HCT116 (cell line): ENCODE measurements at regions of chr19 and their contacts with region 1.

Region 1: DNA sequence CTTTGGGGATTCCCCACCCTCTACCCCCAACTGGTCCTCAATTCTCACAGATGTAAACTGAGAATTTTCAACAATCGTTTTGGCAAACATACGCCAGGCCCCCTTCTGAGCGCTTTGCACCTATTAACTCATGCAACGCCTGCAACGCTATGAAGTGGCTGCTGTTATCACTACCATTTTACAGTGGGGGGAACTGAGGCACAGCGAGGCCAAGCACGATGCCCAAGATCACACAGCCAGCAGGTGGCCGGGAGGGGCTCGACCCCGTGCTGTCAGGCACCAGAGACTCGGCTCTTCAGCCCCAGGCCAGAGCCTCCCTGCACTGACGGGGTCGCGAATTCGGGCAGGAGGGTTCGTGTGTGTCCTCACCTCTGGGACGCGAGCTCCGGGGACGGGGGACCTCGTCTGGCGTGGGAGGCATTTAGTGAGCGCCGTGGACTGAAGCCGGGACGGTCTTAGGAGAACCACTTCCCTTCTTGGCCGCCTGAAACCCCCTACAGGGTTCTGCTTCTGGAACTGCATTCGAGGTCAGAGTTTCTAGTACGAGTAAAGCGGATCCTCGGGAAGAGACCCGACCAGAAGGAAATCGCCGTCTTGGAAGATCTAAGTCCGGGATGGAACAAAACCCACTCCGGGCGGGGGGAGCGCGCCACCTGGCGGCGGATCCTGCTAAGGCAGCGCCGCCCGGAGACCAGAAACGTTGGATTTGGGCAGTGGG is 21.0 kb downstream of the ZNF114 start:
- DNase-seq: no peak
- ATAC-seq: peak; percentile 76
- H3K4me3 ChIP-seq: peak overlapping the region; percentile 50 to 70
- H3K27ac ChIP-seq: peak overlapping the region; percentile 50
- H3K4me1 ChIP-seq: peaks cover 2 to 39% of the 10 kb centered on the region in 2 experiments; a peak in 3 of 4 replicates
- H3K27me3 ChIP-seq: no peaks in the 10 kb centered on the region
- CTCF ChIP-seq: peak; percentile 95 to 99 (median 96)
- POLR2A ChIP-seq: no peak
- RAD21 ChIP-seq: peak; percentile 93

Region 2: DNA sequence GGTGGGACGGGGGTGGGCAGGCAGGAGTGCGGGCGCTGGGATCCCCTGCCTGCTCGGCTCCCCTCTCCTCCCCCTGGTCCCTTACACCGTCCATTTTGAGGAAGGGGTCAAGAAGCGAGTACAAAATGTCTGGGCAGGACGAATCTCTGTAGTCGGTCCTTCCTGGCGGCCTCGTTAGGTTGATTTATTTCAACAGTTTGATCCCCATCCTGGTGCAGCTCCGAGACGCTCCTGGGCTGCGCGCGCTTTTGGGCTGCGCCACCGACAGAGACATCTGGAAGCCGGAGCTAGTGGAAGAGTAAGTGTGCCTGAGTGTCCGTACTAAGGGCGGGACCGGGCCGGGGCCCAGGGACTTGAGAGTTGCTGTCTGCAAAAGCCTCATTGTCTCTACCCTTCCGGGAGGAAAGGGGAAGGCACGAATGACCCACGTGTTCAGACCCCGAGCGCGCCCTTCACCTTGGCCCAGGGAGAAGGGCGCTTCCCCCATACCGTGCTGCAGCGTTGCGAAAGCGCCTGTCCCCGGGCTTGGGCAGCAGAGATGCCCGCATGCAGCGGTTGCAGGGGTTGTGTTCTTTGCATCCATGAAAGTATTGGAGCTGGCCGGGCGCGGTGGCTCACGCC is 19.3 kb before region 1 on chr19:
- CTCF ChIA-PET with region 1: interaction called, 16 read pairs
- POLR2A ChIA-PET with region 1: interaction called, 7 read pairs
- RAD21 ChIA-PET with region 1: interaction called, 3 to 5 read pairs
- intact Hi-C with region 1: loop called (anchors 1 kb)
- DNase-seq: no peak
- ATAC-seq: peak; percentile 43
- H3K4me3 ChIP-seq: peak overlapping the region; percentile 56 to 61
- H3K27ac ChIP-seq: peak overlapping the region; percentile 85
- H3K4me1 ChIP-seq: peaks cover 18 to 43% of the 10 kb centered on the region in 2 experiments
- H3K27me3 ChIP-seq: no peaks in the 10 kb centered on the region
- CTCF ChIP-seq: no peak
- POLR2A ChIP-seq: peak; percentile 44
- RAD21 ChIP-seq: no peak

Region 3: DNA sequence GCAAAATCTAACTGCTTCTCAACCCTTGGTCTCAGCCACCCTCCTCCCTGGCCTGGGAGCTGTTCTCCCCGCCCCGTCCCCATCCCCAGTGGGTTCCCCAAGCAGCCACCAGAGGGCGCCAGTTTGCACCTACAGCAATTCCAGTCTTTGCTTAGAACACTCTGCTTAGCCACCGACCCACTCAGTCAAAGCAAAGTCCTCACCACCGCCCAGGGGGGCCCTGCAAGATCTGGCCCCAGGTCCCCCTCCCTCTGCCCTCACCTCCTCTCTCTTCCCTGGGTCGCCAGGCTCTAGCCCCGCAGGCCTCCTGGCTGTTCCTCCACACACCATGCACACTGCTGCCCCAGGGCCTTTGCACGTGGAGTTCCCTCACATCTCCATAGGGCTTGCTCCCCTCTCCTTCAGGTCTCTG is 60.4 kb after region 1 on chr19:
- CTCF ChIA-PET with region 1: no interaction called
- POLR2A ChIA-PET with region 1: no interaction called
- RAD21 ChIA-PET with region 1: no interaction called
- intact Hi-C with region 1: no loop called
- DNase-seq: no peak
- ATAC-seq: peak; percentile 67
- H3K4me3 ChIP-seq: no peak overlapping the region
- H3K27ac ChIP-seq: no peak overlapping the region
- H3K4me1 ChIP-seq: peaks cover 22 to 46% of the 10 kb centered on the region in 2 experiments
- H3K27me3 ChIP-seq: no peaks in the 10 kb centered on the region
- CTCF ChIP-seq: peak; percentile 75 to 96 (median 95); a peak in 5 of 6 replicates
- POLR2A ChIP-seq: no peak
- RAD21 ChIP-seq: peak; percentile 80